Panc1 (cell line): ENCODE measurements at regions of chr18 and their contacts with region 1.

Region 1: DNA sequence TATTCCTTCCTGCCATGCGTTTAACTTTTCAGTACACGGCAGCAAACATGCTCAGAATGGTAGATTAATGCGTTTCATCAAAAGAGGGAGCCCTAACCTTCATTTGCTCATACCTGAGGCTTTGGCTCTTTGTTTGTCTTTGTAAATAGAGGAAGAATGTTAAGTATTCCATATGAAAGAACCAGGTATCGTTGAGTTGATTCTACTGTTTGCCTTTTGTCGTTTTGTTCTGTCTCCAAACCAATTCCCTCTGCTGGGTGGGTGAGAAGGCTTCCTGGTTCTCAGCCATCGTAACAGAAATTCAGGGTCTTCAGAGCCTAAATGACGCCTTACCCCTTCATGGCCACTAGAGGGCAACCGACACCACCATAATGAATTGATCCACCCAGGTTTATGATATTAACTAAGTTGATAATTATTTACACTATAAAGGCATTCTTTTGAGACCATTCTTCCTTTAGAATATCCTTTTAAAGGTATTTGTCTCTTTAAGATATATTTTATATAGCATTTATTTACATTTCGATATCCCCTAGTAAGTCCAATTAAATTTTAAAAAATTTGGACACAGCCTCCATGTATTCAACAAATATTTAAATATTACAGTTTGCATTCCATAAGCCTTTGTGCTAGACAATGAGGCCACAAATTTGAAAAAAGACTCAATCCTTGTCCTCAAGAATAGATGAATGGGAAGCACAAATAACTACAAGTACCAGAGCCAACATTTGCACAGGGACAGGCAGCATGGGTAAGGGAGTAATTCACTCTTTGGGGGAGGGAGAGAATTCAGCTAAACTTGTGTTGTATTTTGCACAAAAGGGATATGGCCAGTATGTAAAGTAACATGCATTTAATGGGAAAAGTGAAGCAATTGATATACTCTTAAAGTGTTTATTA is 48.1 kb downstream of the TIMM21 start:
- DNase-seq: peak; percentile 70
- ATAC-seq: peak; percentile 87
- H3K4me3 ChIP-seq: peak overlapping the region; percentile 16 to 37; a peak in 3 of 4 replicates
- H3K27ac ChIP-seq: no peak overlapping the region
- H3K4me1 ChIP-seq: no peaks in the 10 kb centered on the region
- H3K27me3 ChIP-seq: peaks cover 5% of the 10 kb centered on the region
- CTCF ChIP-seq: peak; percentile 97

Region 2: GRCh38 chr18:73962256-73962655 is 234.2 kb before region 1 on chr18:
- CTCF ChIA-PET with region 1: no interaction called
- POLR2A ChIA-PET with region 1: no interaction called
- in situ Hi-C with region 1: no loop called
- intact Hi-C with region 1: no loop called
- DNase-seq: no peak
- ATAC-seq: no peak
- H3K4me3 ChIP-seq: no peak overlapping the region
- H3K27ac ChIP-seq: no peak overlapping the region
- H3K4me1 ChIP-seq: no peaks in the 10 kb centered on the region
- H3K27me3 ChIP-seq: 0 out of 2 replicates have a peak, but pooled peaks cover 2% of the 10 kb centered on the region
- CTCF ChIP-seq: no peak

Region 3: DNA sequence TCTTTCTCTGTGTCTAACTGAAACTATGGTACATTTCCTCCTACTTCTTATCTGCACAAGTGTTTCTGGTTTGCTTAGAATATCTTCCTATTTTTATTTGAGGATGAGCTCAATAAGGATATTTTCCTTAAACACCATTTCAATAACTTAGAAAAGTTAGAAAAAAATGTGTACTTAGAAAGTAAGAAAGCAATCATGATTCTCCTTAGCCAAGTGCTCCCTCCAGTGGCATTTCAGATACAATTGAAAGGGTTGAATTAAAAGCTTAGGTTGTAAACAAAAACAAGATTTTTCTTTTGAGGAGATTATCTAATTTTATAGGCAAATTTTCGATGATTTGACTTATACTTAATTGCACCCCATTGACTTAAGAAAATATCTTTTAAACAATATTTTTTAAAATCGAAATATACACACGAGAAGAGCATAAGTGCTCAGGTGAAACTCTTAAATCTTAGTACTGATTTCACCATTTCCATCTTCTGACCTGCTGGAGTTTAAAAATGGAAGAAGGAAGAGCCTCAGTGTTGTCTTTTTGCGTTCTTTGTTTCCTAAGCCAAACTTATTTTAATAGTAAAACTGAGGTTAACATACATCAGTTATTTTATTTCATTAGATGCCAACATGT is 146.1 kb after region 1 on chr18:
- CTCF ChIA-PET with region 1: interaction called, 10 read pairs
- POLR2A ChIA-PET with region 1: no interaction called
- in situ Hi-C with region 1: loop called (anchors 25 kb)
- intact Hi-C with region 1: loop called (anchors 1 kb)
- DNase-seq: peak; percentile 54
- ATAC-seq: peak; percentile 83
- H3K4me3 ChIP-seq: no peak overlapping the region
- H3K27ac ChIP-seq: no peak overlapping the region
- H3K4me1 ChIP-seq: no peaks in the 10 kb centered on the region
- H3K27me3 ChIP-seq: peaks cover 29% of the 10 kb centered on the region
- CTCF ChIP-seq: peak; percentile 78; the same call in 1 of the 2 replicates

Region 4: GRCh38 chr18:74495581-74496507 is 299.4 kb after region 1 on chr18 and contains the start of gene CNDP2:
- CTCF ChIA-PET with region 1: interaction called, 12 read pairs
- POLR2A ChIA-PET with region 1: no interaction called
- in situ Hi-C with region 1: no loop called
- intact Hi-C with region 1: loop called (anchors 1 kb)
- DNase-seq: peak; percentile 99
- ATAC-seq: peak; percentile 91
- H3K4me3 ChIP-seq: peak within 1 kb of the TSS; percentile 71 to 73
- H3K27ac ChIP-seq: peak within 1 kb of the TSS; percentile 90
- H3K4me1 ChIP-seq: peaks cover 36% of the 10 kb centered on the region
- H3K27me3 ChIP-seq: no peaks in the 10 kb centered on the region
- CTCF ChIP-seq: no peak
- total RNA-seq, gene CNDP2: 310 TPM

Region 5: GRCh38 chr18:74551936-74552555 is 355.6 kb after region 1 on chr18:
- CTCF ChIA-PET with region 1: interaction called, 5 read pairs
- POLR2A ChIA-PET with region 1: no interaction called
- in situ Hi-C with region 1: no loop called
- intact Hi-C with region 1: loop called (anchors 1 kb)
- DNase-seq: peak; percentile 80
- ATAC-seq: peak; percentile 100
- H3K4me3 ChIP-seq: no peak overlapping the region
- H3K27ac ChIP-seq: no peak overlapping the region
- H3K4me1 ChIP-seq: no peaks in the 10 kb centered on the region
- H3K27me3 ChIP-seq: 0 out of 2 replicates have a peak, but pooled peaks cover 4% of the 10 kb centered on the region
- CTCF ChIP-seq: no peak

Region 6: DNA sequence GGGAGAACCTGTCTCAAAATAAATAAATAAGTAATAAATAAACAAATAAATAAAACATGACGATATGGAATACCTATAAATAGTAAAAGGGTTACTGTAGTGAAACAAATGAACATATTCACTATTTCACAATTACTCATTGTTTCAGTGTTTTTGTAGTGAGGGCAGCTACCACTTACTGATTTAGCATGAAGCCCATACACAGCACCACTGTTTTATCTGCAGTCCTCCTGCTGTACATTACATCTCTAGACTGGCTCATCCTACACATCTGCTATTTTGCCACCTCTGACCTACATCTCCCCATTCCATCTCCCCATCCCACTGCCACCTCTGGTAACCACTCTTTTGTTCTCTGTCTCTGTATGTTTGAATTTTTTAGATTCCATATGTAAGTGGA is 1563.7 kb after region 1 on chr18:
- CTCF ChIA-PET with region 1: no interaction called
- POLR2A ChIA-PET with region 1: no interaction called
- in situ Hi-C with region 1: no loop called
- intact Hi-C with region 1: loop called (anchors 5 kb)
- DNase-seq: no peak
- ATAC-seq: no peak
- H3K4me3 ChIP-seq: no peak overlapping the region
- H3K27ac ChIP-seq: no peak overlapping the region
- H3K4me1 ChIP-seq: no peaks in the 10 kb centered on the region
- H3K27me3 ChIP-seq: peaks cover 7% of the 10 kb centered on the region; the same call in 1 of the 2 replicates
- CTCF ChIP-seq: no peak